ENCODE measurements at regions of chr4 and their contacts with region 1.

Region 1: GRCh38 chr4:119286377-119287002 is 35.4 kb downstream of the FABP2 start:
- DNase-seq: no peak
- ATAC-seq: peak; percentile 68 to 86 (median 82)
- H3K4me3 ChIP-seq: peak overlapping the region; percentile 49
- H3K27ac ChIP-seq: peak overlapping the region; percentile 77
- H3K4me1 ChIP-seq: peaks cover 55% of the 10 kb centered on the region
- H3K27me3 ChIP-seq: no peaks in the 10 kb centered on the region
- CTCF ChIP-seq: peak; percentile 81

Region 2: DNA sequence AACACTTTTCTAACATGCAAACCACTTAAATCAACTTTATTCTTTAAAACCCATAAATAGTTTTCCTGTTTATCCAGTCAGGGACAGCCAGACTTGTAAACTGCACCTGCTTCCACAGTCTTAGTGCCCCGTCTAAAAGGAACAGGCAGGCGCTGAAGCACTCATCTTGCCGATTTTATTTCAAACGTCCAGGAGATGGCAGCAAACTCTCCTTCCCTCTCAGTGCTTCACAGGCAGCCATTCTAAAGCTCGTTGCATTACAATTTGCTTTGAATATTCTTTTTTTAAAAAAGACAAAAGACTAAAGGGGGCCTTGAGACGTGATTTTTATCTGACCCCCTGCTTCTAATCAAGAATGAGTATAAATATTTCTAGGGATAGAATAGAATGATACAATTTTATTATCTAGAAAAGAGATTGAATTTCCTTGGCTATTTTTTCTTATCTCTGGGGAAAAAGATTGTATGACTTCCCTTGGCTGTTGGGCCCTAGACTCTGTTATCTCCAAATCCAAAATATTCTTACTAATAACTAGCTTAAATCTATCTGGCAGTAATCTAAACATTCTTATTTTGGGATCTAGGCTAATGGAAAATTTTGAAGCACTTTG is 244.4 kb before region 1 on chr4:
- intact Hi-C with region 1: loop called (anchors 5 kb)
- DNase-seq: no peak
- ATAC-seq: peak; percentile 61 to 68 (median 64)
- H3K4me3 ChIP-seq: peak overlapping the region; percentile 40
- H3K27ac ChIP-seq: peak overlapping the region; percentile 98
- H3K4me1 ChIP-seq: peaks cover 66% of the 10 kb centered on the region
- H3K27me3 ChIP-seq: no peaks in the 10 kb centered on the region
- CTCF ChIP-seq: peak; percentile 72

Region 3: DNA sequence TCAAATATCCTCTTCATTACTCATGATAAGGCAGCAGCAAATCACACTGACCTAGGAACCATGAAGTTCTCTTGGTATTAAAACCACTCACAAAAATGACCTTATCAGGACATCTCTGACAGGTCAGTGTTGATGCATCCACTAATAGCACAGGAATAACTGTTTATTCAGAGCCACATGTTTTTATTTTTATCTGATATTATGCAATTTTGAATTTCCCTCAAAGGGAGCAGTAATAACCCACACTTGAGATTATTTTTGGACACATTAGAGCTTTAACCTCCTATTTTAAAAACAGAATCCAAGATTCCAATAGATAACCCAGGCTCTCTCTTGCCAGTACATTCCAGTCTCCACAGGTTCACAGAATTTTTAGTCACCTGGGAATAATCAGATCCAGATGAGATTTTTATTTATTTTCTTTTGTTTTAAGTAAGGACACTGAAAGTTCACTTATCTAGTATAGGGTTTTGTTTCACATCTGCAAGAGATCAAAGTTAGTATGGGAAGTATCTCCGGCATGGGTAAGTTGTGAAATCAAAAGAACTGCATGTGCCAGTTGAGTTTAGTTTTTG is 187.2 kb before region 1 on chr4:
- intact Hi-C with region 1: loop called in 1 of 2 experiments (anchors 5 kb)
- DNase-seq: no peak
- ATAC-seq: peak; percentile 26 to 77 (median 58)
- H3K4me3 ChIP-seq: no peak overlapping the region
- H3K27ac ChIP-seq: peak overlapping the region; percentile 57
- H3K4me1 ChIP-seq: peaks cover 33% of the 10 kb centered on the region
- H3K27me3 ChIP-seq: no peaks in the 10 kb centered on the region
- CTCF ChIP-seq: no peak

Region 4: DNA sequence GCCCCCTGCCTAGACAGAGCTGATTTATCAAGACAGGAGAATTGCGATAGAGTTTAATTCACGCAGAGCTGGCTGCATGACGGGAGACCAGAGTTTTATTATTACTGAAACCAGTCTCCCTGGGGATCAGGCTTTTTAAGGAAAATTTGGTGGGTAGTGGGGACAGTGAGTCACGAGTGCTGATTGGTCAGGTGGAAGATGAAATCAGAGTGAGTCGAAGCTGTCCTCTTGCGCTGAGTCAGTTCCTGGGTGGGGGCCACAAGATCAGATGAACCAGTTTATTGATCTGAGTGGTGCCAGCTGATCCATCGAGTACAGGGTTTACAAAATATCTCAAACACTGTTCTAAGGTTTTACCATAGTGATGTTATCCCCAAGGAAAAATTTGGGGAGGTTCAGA is 114.3 kb before region 1 on chr4:
- intact Hi-C with region 1: no loop called
- DNase-seq: no peak
- ATAC-seq: no peak
- H3K4me3 ChIP-seq: no peak overlapping the region
- H3K27ac ChIP-seq: no peak overlapping the region
- H3K4me1 ChIP-seq: no peaks in the 10 kb centered on the region
- H3K27me3 ChIP-seq: no peaks in the 10 kb centered on the region
- CTCF ChIP-seq: no peak

Region 5: GRCh38 chr4:119212234-119212963 is 74.1 kb before region 1 on chr4 and contains the start of gene USP53:
- intact Hi-C with region 1: loop called in 1 of 2 experiments (anchors 10 kb)
- DNase-seq: peak; percentile 96 to 98
- ATAC-seq: peak; percentile 93 to 96 (median 96)
- H3K4me3 ChIP-seq: peak within 1 kb of the TSS; percentile 91
- H3K27ac ChIP-seq: peak within 1 kb of the TSS; percentile 99
- H3K4me1 ChIP-seq: peaks cover 23% of the 10 kb centered on the region
- H3K27me3 ChIP-seq: no peaks in the 10 kb centered on the region
- CTCF ChIP-seq: no peak
- total RNA-seq, gene USP53: 43.8 to 89.5 (median 57.3) TPM

Region 6: GRCh38 chr4:119227690-119228089 is 58.8 kb before region 1 on chr4:
- intact Hi-C with region 1: loop called in 1 of 2 experiments (anchors 10 kb)
- DNase-seq: no peak
- ATAC-seq: no peak
- H3K4me3 ChIP-seq: no peak overlapping the region
- H3K27ac ChIP-seq: no peak overlapping the region
- H3K4me1 ChIP-seq: peaks cover 33% of the 10 kb centered on the region
- H3K27me3 ChIP-seq: peaks cover 0 to 2% (median 0%) of the 10 kb centered on the region in 3 donors
- CTCF ChIP-seq: no peak

Region 7: GRCh38 chr4:119238068-119238722 is 48.3 kb before region 1 on chr4:
- intact Hi-C with region 1: loop called in 1 of 2 experiments (anchors 5 kb)
- DNase-seq: no peak
- ATAC-seq: peak in 1 of 4 donors; percentile 21
- H3K4me3 ChIP-seq: no peak overlapping the region
- H3K27ac ChIP-seq: peak overlapping the region; percentile 8
- H3K4me1 ChIP-seq: peaks cover 32% of the 10 kb centered on the region
- H3K27me3 ChIP-seq: no peaks in the 10 kb centered on the region
- CTCF ChIP-seq: no peak